ENCODE measurements at regions of chr10 and their contacts with region 1.

Region 1: DNA sequence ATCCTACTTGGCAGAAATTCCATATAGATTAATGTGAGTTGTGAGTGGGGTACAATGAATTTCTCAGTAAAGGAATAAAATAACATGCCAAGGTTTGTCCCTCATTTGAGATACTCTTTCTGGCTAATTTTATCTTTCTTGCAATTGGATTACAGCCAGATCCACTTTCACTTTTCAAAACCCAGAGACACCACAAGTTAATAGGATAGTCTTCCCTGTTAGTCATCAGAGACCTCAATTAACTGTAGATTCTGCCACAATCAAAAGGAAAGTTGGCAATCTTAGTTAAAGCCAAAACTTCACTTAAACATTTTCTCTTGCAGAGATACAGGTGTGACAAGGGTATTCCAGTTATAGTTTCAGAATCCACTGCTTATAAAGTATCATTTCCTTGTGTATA is 91.4 kb upstream of the PHYHIPL start:
- DNase-seq: no peak
- ATAC-seq: no peak
- H3K4me3 ChIP-seq: no peak overlapping the region
- H3K27ac ChIP-seq: no peak overlapping the region
- H3K4me1 ChIP-seq: peaks cover 4 to 13% of the 10 kb centered on the region in 2 donors
- H3K27me3 ChIP-seq: no peaks in the 10 kb centered on the region

Region 2: GRCh38 chr10:58641095-58641531 is 443.9 kb before region 1 on chr10:
- intact Hi-C with region 1: no loop called
- DNase-seq: no peak
- ATAC-seq: no peak
- H3K4me3 ChIP-seq: no peak overlapping the region
- H3K27ac ChIP-seq: no peak overlapping the region
- H3K4me1 ChIP-seq: no peaks in the 10 kb centered on the region
- H3K27me3 ChIP-seq: no peaks in the 10 kb centered on the region

Region 3: GRCh38 chr10:58998924-58999713 is 85.9 kb before region 1 on chr10:
- intact Hi-C with region 1: loop called (anchors 5 kb)
- DNase-seq: peak; percentile 80 to 82
- ATAC-seq: peak; percentile 91
- H3K4me3 ChIP-seq: no peak overlapping the region
- H3K27ac ChIP-seq: peak overlapping the region; percentile 50 to 70
- H3K4me1 ChIP-seq: peaks cover 0 to 7% of the 10 kb centered on the region in 2 donors
- H3K27me3 ChIP-seq: no peaks in the 10 kb centered on the region

Region 4: DNA sequence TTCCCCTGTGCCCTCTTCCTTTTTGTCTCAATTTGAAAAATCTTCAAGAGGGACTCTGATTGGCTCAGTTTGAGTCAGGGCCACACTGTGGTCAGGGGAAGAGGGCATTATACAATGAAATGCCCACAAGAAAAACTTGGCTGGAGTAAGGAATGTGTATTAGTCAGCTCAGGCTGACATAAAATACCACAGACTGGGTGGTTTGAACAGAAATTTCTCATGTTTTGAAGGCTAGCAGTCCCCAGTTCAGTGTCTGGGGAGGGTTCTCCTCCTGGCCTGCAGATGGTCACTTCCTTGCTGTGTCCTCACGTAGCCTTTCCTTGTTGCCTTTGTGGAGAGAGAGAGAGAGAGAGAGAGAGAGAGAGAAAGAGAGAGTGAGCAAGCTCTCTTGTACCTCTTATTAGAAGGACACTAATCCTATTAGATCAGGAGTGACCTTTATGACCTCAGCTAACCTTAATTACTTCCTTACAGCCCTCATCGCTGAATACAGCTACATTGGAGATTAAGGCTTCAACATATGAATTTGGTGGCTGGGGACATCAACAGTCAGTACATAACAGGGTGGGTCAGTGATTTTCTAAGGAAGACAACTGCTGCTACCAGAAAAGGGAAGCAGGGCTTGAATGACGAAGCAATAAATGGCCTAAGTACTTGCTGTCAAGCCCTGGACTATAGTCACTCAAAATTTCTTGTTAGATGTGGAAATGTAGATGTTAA is 303.1 kb after region 1 on chr10:
- intact Hi-C with region 1: no loop called
- DNase-seq: peak in 1 of 2 donors; percentile 54
- ATAC-seq: peak; percentile 61
- H3K4me3 ChIP-seq: no peak overlapping the region
- H3K27ac ChIP-seq: peak overlapping the region; percentile 90 to 95
- H3K4me1 ChIP-seq: peaks cover 3 to 5% of the 10 kb centered on the region in 2 donors
- H3K27me3 ChIP-seq: no peaks in the 10 kb centered on the region

Measured in aorta (tissue), 5 donors.